ENCODE measurements at regions of chr22 and their contacts with region 1.

Region 1: DNA sequence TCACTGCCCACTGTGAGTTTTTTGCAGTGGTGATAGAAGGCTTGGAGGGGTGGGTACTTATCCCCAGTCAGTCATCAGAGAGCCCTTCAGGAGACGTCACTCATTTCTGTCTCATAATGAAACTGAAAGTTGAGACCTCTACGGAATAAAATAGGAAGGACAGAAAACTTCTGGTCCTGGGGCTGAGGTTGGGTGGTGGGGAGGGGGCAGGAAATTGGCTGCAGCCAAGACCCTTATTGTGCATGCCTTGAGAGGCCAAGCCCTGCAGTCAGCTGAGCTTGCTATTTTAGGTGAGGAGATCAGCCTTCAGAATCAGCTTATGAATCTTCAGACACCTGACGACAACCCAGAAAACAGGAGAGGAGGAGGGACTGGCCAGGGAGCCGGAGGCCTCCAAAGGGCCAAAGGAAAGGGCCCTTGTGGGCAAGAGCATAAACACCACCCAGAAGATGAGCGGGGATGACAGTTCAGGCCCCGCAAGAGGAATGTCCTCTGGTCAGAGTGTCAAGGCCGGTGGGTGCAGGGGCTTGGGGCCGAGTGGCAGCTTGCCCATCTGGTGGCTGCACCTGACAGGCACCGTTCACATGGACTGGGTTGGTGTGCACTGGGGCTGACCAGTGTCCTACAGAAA is 17.9 kb upstream of the ADA2 start:
- DNase-seq: peak; percentile 84
- CTCF ChIP-seq: no peak

Region 2: GRCh38 chr22:17063411-17064106 is 173.6 kb before region 1 on chr22:
- CTCF ChIA-PET with region 1: no interaction called
- POLR2A ChIA-PET with region 1: no interaction called
- DNase-seq: no peak
- CTCF ChIP-seq: no peak

Region 3: GRCh38 chr22:17213976-17214375 is 23.2 kb before region 1 on chr22:
- CTCF ChIA-PET with region 1: interaction called, 13 read pairs
- POLR2A ChIA-PET with region 1: no interaction called
- DNase-seq: no peak
- CTCF ChIP-seq: peak; percentile 35